ENCODE measurements at regions of chr7 and their contacts with region 1.

Region 1: DNA sequence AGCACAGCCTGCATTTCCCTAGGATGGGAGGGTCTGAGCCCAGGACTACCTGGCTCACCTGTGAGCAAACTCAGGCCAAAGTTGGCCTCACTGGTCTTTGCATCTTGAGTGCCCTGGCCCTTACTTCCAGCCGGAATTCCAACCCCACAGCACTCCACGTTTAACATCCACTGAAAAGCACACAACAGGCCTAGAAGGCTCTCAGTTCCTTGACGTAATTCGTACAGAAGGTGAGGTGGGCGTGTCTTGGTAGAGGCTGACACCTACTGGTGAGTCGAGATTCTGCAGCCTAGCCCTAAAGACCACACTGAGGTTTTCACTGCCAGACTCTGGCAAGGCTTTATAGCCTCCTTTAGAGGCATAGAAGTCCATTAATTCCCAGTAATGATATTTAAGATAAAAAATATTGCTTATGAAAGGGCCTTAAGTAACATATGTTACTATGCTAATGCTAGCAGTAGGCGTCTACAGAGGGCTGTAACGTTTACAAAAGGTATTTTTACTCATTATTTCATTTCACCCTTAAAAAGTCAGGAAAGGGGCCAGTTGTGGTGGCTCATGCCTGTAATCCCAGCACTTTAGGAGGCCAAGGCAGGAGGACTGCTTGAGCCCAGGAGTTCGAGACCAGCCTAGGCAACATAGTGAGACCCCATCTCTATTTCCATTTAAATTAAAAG is 95.8 kb downstream of the HIP1 start:
- DNase-seq: peak; percentile 63 to 86
- ATAC-seq: peak; percentile 92 to 97 (median 92)
- H3K4me3 ChIP-seq: no peak overlapping the region
- H3K4me3 Mint-ChIP-seq: peak overlapping the region; percentile 42
- H3K27ac ChIP-seq: no peak overlapping the region
- H3K27ac Mint-ChIP-seq: peak overlapping the region; percentile 53 to 81
- H3K4me1 ChIP-seq: peaks cover 24% of the 10 kb centered on the region
- H3K4me1 Mint-ChIP-seq: peaks cover 0 to 26% of the 10 kb centered on the region in 2 donors
- H3K27me3 ChIP-seq: no peaks in the 10 kb centered on the region
- H3K27me3 Mint-ChIP-seq: no peaks in the 10 kb centered on the region
- CTCF ChIP-seq: peak; percentile 92

Region 2: GRCh38 chr7:75531359-75531821 is 111.6 kb before region 1 on chr7:
- intact Hi-C with region 1: loop called (anchors 1 kb)
- DNase-seq: no peak
- ATAC-seq: no peak
- H3K4me3 ChIP-seq: no peak overlapping the region
- H3K4me3 Mint-ChIP-seq: no peak overlapping the region
- H3K27ac ChIP-seq: no peak overlapping the region
- H3K27ac Mint-ChIP-seq: no peak overlapping the region
- H3K4me1 ChIP-seq: peaks cover 16% of the 10 kb centered on the region
- H3K4me1 Mint-ChIP-seq: peaks cover 11 to 17% of the 10 kb centered on the region in 2 donors
- H3K27me3 ChIP-seq: no peaks in the 10 kb centered on the region
- H3K27me3 Mint-ChIP-seq: no peaks in the 10 kb centered on the region
- CTCF ChIP-seq: no peak

Region 3: GRCh38 chr7:75629044-75629443 is 13.9 kb before region 1 on chr7:
- intact Hi-C with region 1: no loop called
- DNase-seq: no peak
- ATAC-seq: no peak
- H3K4me3 ChIP-seq: no peak overlapping the region
- H3K4me3 Mint-ChIP-seq: no peak overlapping the region
- H3K27ac ChIP-seq: no peak overlapping the region
- H3K27ac Mint-ChIP-seq: no peak overlapping the region
- H3K4me1 ChIP-seq: peaks cover 9% of the 10 kb centered on the region
- H3K4me1 Mint-ChIP-seq: peaks cover 13 to 34% of the 10 kb centered on the region in 2 donors
- H3K27me3 ChIP-seq: no peaks in the 10 kb centered on the region
- H3K27me3 Mint-ChIP-seq: no peaks in the 10 kb centered on the region
- CTCF ChIP-seq: no peak

Region 4: DNA sequence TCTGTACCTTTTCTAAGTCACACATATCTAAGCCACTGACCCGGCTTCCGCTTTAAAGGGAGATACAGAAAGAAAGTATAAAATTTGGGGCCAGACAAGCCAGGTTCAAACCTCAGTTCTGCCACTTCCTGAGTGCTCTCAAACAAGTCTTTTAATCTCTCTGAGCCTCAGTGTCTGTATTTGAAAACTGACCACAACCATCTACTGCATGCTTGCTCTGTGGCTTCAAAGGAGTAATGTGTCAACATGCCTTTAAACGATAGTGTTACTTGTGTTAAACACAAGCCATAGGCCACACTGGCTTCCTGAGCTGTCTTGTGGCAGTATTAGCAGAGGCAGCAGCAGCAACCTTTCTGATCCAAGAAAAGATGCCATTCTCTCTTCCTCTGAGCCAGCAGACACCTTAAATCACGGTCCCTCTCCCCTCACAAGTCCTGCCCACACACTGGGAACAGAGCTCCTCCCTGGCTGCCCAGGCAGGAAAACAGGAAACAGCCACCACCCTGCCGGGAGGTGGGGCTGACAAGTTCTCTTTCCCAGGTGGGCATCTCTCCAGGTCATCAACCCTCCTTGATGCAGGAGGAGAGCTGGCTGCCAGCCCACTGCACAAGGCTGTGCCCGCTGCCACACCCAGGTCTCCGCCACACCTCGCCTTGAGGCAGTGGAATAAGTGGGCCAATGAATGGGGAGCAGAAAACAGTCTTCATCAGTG is 85.1 kb after region 1 on chr7:
- intact Hi-C with region 1: no loop called
- DNase-seq: peak; percentile 45 to 84
- ATAC-seq: peak; percentile 80 to 92 (median 89)
- H3K4me3 ChIP-seq: no peak overlapping the region
- H3K4me3 Mint-ChIP-seq: peak overlapping the region; percentile 78
- H3K27ac ChIP-seq: peak overlapping the region; percentile 70
- H3K27ac Mint-ChIP-seq: peak overlapping the region; percentile 72 to 92
- H3K4me1 ChIP-seq: peaks cover 92% of the 10 kb centered on the region
- H3K4me1 Mint-ChIP-seq: peaks cover 53 to 55% of the 10 kb centered on the region in 2 donors
- H3K27me3 ChIP-seq: no peaks in the 10 kb centered on the region
- H3K27me3 Mint-ChIP-seq: peaks cover 0 to 2% of the 10 kb centered on the region in 2 donors
- CTCF ChIP-seq: no peak

Region 5: GRCh38 chr7:75762314-75762917 is 119.5 kb after region 1 on chr7:
- intact Hi-C with region 1: loop called (anchors 1 kb)
- DNase-seq: peak in 1 of 2 donors; percentile 71
- ATAC-seq: peak; percentile 87 to 99 (median 99)
- H3K4me3 ChIP-seq: no peak overlapping the region
- H3K4me3 Mint-ChIP-seq: no peak overlapping the region
- H3K27ac ChIP-seq: no peak overlapping the region
- H3K27ac Mint-ChIP-seq: no peak overlapping the region
- H3K4me1 ChIP-seq: peaks cover 5% of the 10 kb centered on the region
- H3K4me1 Mint-ChIP-seq: peaks cover 6 to 8% of the 10 kb centered on the region in 2 donors
- H3K27me3 ChIP-seq: no peaks in the 10 kb centered on the region
- H3K27me3 Mint-ChIP-seq: peaks cover 0 to 3% of the 10 kb centered on the region in 2 donors
- CTCF ChIP-seq: peak; percentile 69

Measured in natural killer cell (primary cell).